ENCODE measurements at regions of chrX and their contacts with region 1.

Region 1: DNA sequence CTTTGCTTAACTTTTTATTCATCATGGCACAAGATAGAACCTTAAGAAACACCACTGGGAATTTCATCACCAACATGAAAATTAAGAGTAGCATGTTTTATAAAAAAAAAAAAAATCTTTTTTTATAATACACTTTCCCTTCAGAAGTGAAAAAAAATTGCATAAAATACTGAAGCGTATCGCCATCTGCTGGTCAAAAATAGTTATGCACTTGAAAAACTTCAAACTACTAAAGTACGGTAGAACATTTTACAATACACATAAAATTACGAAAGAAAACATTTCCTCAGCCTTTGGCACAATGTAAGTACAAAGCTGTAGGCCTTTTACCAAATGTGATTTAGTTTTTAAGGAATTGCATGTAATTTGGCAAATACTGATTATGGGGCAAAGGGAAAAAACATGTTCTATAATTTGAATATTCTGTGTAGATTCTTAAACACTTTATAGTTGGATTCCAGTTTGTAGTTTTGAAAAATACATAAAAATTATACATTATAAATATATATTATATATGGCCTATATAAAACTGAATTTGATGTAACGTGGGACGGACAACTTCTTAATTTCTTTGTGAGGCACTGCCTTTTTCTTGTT is 26.5 kb downstream of the HCCS start:
- DNase-seq: peak; percentile 13
- ATAC-seq: no peak
- H3K4me3 ChIP-seq: no peak overlapping the region
- H3K27ac ChIP-seq: no peak overlapping the region
- H3K4me1 ChIP-seq: no peaks in the 10 kb centered on the region
- H3K27me3 ChIP-seq: no peaks in the 10 kb centered on the region
- CTCF ChIP-seq: peak; percentile 29 to 48 (median 47); a peak in 4 of 6 replicates
- POLR2A ChIP-seq: no peak
- RAD21 ChIP-seq: peak; percentile 40

Region 2: GRCh38 chrX:10648614-10649013 is 489.0 kb before region 1 on chrX:
- CTCF ChIA-PET with region 1: no interaction called
- POLR2A ChIA-PET with region 1: no interaction called
- RAD21 ChIA-PET with region 1: no interaction called
- intact Hi-C with region 1: loop called (anchors 10 kb)
- DNase-seq: no peak
- ATAC-seq: no peak
- H3K4me3 ChIP-seq: no peak overlapping the region
- H3K27ac ChIP-seq: no peak overlapping the region
- H3K4me1 ChIP-seq: no peaks in the 10 kb centered on the region
- H3K27me3 ChIP-seq: no peaks in the 10 kb centered on the region
- CTCF ChIP-seq: no peak
- POLR2A ChIP-seq: no peak
- RAD21 ChIP-seq: no peak

Region 3: GRCh38 chrX:11273544-11273943 is 135.9 kb after region 1 on chrX:
- CTCF ChIA-PET with region 1: no interaction called
- POLR2A ChIA-PET with region 1: no interaction called
- RAD21 ChIA-PET with region 1: no interaction called
- intact Hi-C with region 1: no loop called
- DNase-seq: no peak
- ATAC-seq: no peak
- H3K4me3 ChIP-seq: no peak overlapping the region
- H3K27ac ChIP-seq: no peak overlapping the region
- H3K4me1 ChIP-seq: no peaks in the 10 kb centered on the region
- H3K27me3 ChIP-seq: 0 out of 2 replicates have a peak, but pooled peaks cover 4% of the 10 kb centered on the region
- CTCF ChIP-seq: no peak
- POLR2A ChIP-seq: no peak
- RAD21 ChIP-seq: no peak

Region 4: GRCh38 chrX:11445540-11445939 is 307.9 kb after region 1 on chrX:
- CTCF ChIA-PET with region 1: no interaction called
- POLR2A ChIA-PET with region 1: no interaction called
- RAD21 ChIA-PET with region 1: no interaction called
- intact Hi-C with region 1: no loop called
- DNase-seq: no peak
- ATAC-seq: no peak
- H3K4me3 ChIP-seq: no peak overlapping the region
- H3K27ac ChIP-seq: no peak overlapping the region
- H3K4me1 ChIP-seq: no peaks in the 10 kb centered on the region
- H3K27me3 ChIP-seq: no peaks in the 10 kb centered on the region
- CTCF ChIP-seq: 0 out of 6 replicates have a peak, but pooled peaks of 1 of the 3 experiments have one; percentile 4
- POLR2A ChIP-seq: no peak
- RAD21 ChIP-seq: no peak